GM12878 (cell line): ENCODE measurements at regions of chr13 and their contacts with region 1.

Region 1: DNA sequence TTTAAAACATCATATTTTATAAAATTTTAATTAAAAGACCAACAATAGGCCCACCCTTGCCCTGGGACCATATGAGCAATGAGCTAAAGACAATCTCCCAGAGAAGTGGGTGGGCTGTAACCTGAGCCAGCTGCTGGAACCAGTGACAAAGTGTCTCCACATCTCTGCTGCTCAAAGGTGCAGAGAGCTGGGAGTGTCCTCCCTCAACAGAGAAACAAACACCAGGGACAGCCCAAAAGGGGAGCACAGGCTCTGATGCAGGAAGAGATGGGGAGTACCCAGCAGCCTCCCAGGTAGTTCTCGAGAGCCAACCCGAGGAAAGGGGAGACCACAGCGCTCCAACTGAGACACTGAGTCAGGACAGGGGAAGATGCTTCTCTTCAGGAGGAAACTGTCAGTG is 39.1 kb downstream of the DOCK9 start:
- DNase-seq: no peak
- ATAC-seq: no peak
- H3K4me3 ChIP-seq: no peak overlapping the region
- H3K27ac ChIP-seq: no peak overlapping the region
- H3K4me1 ChIP-seq: no peaks in the 10 kb centered on the region
- H3K27me3 ChIP-seq: no peaks in the 10 kb centered on the region
- CTCF ChIP-seq: no peak
- EP300 ChIP-seq: no peak
- POLR2A ChIP-seq: no peak
- RAD21 ChIP-seq: no peak

Region 2: GRCh38 chr13:98892821-98893220 is 46.0 kb before region 1 on chr13:
- CTCF ChIA-PET with region 1: no interaction called
- POLR2A ChIA-PET with region 1: no interaction called
- RAD21 ChIA-PET with region 1: no interaction called
- SMC1A ChIA-PET with region 1: no interaction called
- in situ Hi-C with region 1: no loop called
- intact Hi-C with region 1: loop called (anchors 1 kb)
- DNase-seq: no peak
- ATAC-seq: no peak
- H3K4me3 ChIP-seq: no peak overlapping the region
- H3K27ac ChIP-seq: no peak overlapping the region
- H3K4me1 ChIP-seq: no peaks in the 10 kb centered on the region
- H3K27me3 ChIP-seq: no peaks in the 10 kb centered on the region
- CTCF ChIP-seq: no peak
- EP300 ChIP-seq: no peak
- POLR2A ChIP-seq: no peak
- RAD21 ChIP-seq: no peak